Mammary epithelial cell (primary cell): ENCODE measurements at regions of chr6 and their contacts with region 1.

Region 1: GRCh38 chr6:145963216-145964068 is 716 bp downstream of the SHPRH start:
- DNase-seq: peak; percentile 54
- H3K4me3 ChIP-seq: peak overlapping the region; percentile 68 to 96 (median 85)
- H3K27ac ChIP-seq: peak overlapping the region; percentile 71
- H3K4me1 ChIP-seq: peaks cover 5% of the 10 kb centered on the region
- H3K27me3 ChIP-seq: no peaks in the 10 kb centered on the region
- CTCF ChIP-seq: no peak

Region 2: DNA sequence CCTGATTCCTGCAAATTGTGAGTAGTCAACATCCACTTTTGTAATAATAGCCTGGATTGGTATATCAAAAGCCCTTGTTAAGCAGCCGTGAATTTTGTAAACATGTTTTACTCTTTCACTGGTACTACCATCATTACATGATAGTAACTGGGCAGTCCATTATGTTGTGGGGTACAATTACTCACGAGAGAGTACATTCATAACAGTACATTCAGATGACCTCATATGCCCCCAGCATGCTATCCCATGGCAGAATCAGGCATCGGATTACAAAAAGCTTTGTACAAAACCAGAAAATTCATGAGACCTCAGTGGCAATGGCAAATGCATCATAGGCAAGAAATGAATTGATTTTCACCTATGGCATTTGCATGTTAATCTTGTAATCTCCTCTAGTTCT is 394.3 kb before region 1 on chr6:
- CTCF ChIA-PET with region 1: no interaction called
- dilution Hi-C with region 1: no loop called
- in situ Hi-C with region 1: no loop called
- intact Hi-C with region 1: loop called (anchors 10 kb)
- DNase-seq: no peak
- H3K4me3 ChIP-seq: no peak overlapping the region
- H3K27ac ChIP-seq: no peak overlapping the region
- H3K4me1 ChIP-seq: no peaks in the 10 kb centered on the region
- H3K27me3 ChIP-seq: no peaks in the 10 kb centered on the region
- CTCF ChIP-seq: no peak

Region 3: DNA sequence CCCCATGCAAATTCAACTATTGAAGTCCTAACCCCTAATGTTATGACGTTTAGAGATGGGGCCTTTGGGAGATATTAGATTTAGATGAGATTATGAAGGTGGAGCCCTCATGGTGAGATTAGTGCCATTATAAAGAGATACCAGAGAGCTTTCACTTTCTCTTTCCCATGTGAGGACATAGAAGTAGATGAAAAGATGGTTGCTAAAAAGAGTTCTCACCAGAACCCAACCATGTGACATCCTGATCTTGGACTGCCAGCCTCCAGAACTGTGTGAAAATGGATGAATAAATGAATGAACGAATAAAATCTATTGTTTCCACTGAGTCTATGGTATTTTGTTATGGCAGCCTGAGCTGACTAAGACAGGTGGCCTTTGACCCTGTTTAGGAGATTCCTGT is 98.3 kb before region 1 on chr6:
- CTCF ChIA-PET with region 1: no interaction called
- dilution Hi-C with region 1: no loop called
- in situ Hi-C with region 1: no loop called
- intact Hi-C with region 1: no loop called
- DNase-seq: no peak
- H3K4me3 ChIP-seq: no peak overlapping the region
- H3K27ac ChIP-seq: no peak overlapping the region
- H3K4me1 ChIP-seq: no peaks in the 10 kb centered on the region
- H3K27me3 ChIP-seq: no peaks in the 10 kb centered on the region
- CTCF ChIP-seq: no peak

Region 4: DNA sequence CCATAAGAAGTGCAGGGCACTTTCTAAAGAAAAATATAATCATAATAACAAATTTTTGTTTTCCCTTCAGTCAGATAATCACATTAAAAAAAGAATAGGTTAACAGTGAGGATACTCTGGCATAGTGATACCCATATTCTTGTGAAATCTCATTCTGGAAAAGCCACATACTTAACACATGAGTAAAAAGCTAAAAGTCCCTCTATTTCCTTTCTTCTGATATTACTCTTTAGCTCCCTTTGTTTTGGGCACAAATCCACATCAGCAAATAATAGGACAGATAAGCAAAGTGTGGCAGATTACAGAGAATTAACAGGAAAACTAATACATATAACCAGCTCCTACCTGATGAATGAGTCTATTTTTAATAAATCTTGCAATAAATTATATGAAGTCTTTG is 15.1 kb before region 1 on chr6:
- CTCF ChIA-PET with region 1: no interaction called
- dilution Hi-C with region 1: no loop called
- in situ Hi-C with region 1: no loop called
- intact Hi-C with region 1: no loop called
- DNase-seq: peak; percentile 64
- H3K4me3 ChIP-seq: no peak overlapping the region
- H3K27ac ChIP-seq: no peak overlapping the region
- H3K4me1 ChIP-seq: peaks cover 4% of the 10 kb centered on the region
- H3K27me3 ChIP-seq: no peaks in the 10 kb centered on the region
- CTCF ChIP-seq: no peak

Region 5: GRCh38 chr6:146014233-146014632 is 50.8 kb after region 1 on chr6:
- CTCF ChIA-PET with region 1: no interaction called
- dilution Hi-C with region 1: no loop called
- in situ Hi-C with region 1: no loop called
- intact Hi-C with region 1: no loop called
- DNase-seq: no peak
- H3K4me3 ChIP-seq: no peak overlapping the region
- H3K27ac ChIP-seq: no peak overlapping the region
- H3K4me1 ChIP-seq: no peaks in the 10 kb centered on the region
- H3K27me3 ChIP-seq: peaks cover 2% of the 10 kb centered on the region
- CTCF ChIP-seq: no peak

Region 6: DNA sequence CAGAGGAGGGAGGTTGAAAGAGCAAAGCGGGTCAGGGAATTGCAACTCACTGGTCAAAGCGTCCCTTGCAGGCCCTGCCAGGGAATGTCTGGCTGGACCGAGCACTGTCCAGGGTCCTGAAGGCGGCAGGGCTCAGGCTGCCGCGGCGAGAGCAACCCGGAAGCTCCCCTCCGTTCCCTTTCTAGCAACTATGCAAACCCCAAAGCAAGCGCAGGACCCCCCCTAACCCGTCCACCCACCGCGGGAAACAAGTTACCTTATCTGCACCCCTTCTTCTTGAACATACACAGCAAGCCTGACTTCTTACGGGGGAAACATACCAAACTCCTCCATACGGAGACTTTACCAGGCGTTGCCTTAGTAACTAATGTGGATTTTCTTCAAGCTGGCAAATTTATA is 64.8 kb after region 1 on chr6:
- CTCF ChIA-PET with region 1: no interaction called
- dilution Hi-C with region 1: no loop called
- in situ Hi-C with region 1: no loop called
- intact Hi-C with region 1: loop called (anchors 2 kb)
- DNase-seq: peak; percentile 46
- H3K4me3 ChIP-seq: peak overlapping the region in 1 of 3 experiments; percentile 7
- H3K27ac ChIP-seq: no peak overlapping the region
- H3K4me1 ChIP-seq: no peaks in the 10 kb centered on the region
- H3K27me3 ChIP-seq: peaks cover 24% of the 10 kb centered on the region
- CTCF ChIP-seq: no peak

Region 7: DNA sequence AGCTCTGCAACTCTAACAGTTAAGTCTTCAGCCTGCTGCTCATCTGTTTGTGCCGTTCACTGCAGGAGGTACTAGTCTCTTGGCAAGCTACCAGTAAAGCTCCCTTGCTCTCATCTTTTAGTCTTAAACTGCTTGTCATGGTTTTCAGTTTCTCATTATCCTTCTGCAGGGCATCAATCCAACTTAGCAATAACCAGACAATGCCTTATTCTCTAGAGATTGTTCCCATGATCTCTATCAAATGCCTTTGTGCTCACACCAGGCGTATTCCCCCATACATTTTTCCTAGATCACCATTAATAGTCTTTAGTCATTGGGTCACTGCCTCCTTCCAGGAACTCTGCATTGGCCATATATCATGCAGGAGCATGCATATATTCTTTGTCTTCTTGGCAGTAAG is 236.7 kb after region 1 on chr6:
- CTCF ChIA-PET with region 1: interaction called, 11 read pairs
- dilution Hi-C with region 1: no loop called
- in situ Hi-C with region 1: no loop called
- intact Hi-C with region 1: no loop called
- DNase-seq: no peak
- H3K4me3 ChIP-seq: no peak overlapping the region
- H3K27ac ChIP-seq: no peak overlapping the region
- H3K4me1 ChIP-seq: no peaks in the 10 kb centered on the region
- H3K27me3 ChIP-seq: no peaks in the 10 kb centered on the region
- CTCF ChIP-seq: no peak